ENCODE measurements at regions of chr12 and their contacts with region 1.

Region 1: GRCh38 chr12:107760809-107761501 is at the start of gene PRDM4:
- DNase-seq: peak; percentile 96 to 97
- ATAC-seq: peak; percentile 99
- H3K4me3 ChIP-seq: peak within 1 kb of the TSS; percentile 84 to 93
- H3K27ac ChIP-seq: peak within 1 kb of the TSS in 1 of 2 donors; percentile 34
- H3K4me1 ChIP-seq: peaks cover 3% of the 10 kb centered on the region in 2 donors
- H3K27me3 ChIP-seq: no peaks in the 10 kb centered on the region
- total RNA-seq, gene PRDM4: 26.2 to 26.7 TPM

Region 2: DNA sequence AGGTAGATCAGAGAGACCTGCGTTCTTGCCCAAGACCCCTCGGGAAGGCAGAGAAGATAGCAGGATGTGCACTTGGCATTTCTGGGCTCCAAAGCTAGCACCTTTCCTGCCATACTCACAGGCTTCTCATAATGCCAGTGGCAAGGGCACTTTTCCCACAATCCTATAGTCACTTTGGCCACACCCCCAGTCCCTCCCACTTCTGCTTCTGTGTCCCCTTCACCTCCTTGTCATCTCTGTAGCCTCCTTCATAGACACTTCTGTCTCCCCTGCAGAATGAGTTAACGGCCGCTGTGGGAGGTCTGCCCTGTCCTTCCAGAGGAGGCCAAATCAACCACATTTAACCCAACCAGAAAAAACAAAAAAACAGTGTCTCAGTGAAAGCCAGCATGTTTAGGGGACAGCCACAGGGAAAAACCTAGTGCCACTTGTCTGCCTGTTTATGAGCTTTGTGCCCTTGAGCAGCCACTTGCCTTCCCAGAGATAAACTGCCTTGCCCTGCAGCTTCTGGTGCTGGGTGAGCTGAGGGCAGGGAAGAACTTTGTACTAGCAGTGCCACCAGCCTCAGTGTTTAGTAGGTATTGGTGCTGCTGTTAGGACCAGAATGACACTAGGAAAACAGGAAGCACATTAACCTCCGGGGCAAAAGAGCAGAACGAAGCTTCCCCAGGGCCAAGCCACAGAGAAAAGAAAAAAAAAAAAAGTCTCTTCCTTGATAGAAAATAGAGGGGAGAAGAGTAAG is 268.4 kb before region 1 on chr12:
- intact Hi-C with region 1: no loop called
- DNase-seq: no peak
- ATAC-seq: no peak
- H3K4me3 ChIP-seq: no peak overlapping the region
- H3K27ac ChIP-seq: no peak overlapping the region
- H3K4me1 ChIP-seq: no peaks in the 10 kb centered on the region
- H3K27me3 ChIP-seq: no peaks in the 10 kb centered on the region

Region 3: GRCh38 chr12:107685360-107686248 is 75.4 kb before region 1 on chr12 and contains the start of gene PWP1:
- intact Hi-C with region 1: loop called (anchors 2 to 5 kb)
- DNase-seq: peak; percentile 97 to 98
- ATAC-seq: peak; percentile 98
- H3K4me3 ChIP-seq: peak within 1 kb of the TSS; percentile 77 to 83
- H3K27ac ChIP-seq: peak within 1 kb of the TSS in 1 of 2 donors; percentile 1
- H3K4me1 ChIP-seq: no peaks in the 10 kb centered on the region
- H3K27me3 ChIP-seq: no peaks in the 10 kb centered on the region
- total RNA-seq, gene PWP1: 23.6 to 27.6 TPM

Measured in aorta (tissue), 5 donors.